ENCODE measurements at regions of chrX and their contacts with region 1.

Region 1: GRCh38 chrX:9626379-9626778 is 139.3 kb downstream of the GPR143 start:
- DNase-seq: no peak
- ATAC-seq: no peak
- H3K4me3 Mint-ChIP-seq: no peak overlapping the region
- H3K27ac Mint-ChIP-seq: no peak overlapping the region
- H3K4me1 Mint-ChIP-seq: peaks cover 12% of the 10 kb centered on the region
- H3K27me3 Mint-ChIP-seq: no peaks in the 10 kb centered on the region
- CTCF ChIP-seq: no peak

Region 2: GRCh38 chrX:9690046-9690445 is 63.7 kb after region 1 on chrX:
- CTCF ChIA-PET with region 1: no interaction called
- POLR2A ChIA-PET with region 1: no interaction called
- intact Hi-C with region 1: loop called (anchors 10 kb)
- DNase-seq: no peak
- ATAC-seq: no peak
- H3K4me3 Mint-ChIP-seq: no peak overlapping the region
- H3K27ac Mint-ChIP-seq: no peak overlapping the region
- H3K4me1 Mint-ChIP-seq: no peaks in the 10 kb centered on the region
- H3K27me3 Mint-ChIP-seq: no peaks in the 10 kb centered on the region
- CTCF ChIP-seq: no peak

Measured in activated B cell treated with CpG ODN at 0.5 μM for 24 hours (primary cell).